Calu3 (cell line): ENCODE measurements at regions of chr6 and their contacts with region 1.

Region 1: DNA sequence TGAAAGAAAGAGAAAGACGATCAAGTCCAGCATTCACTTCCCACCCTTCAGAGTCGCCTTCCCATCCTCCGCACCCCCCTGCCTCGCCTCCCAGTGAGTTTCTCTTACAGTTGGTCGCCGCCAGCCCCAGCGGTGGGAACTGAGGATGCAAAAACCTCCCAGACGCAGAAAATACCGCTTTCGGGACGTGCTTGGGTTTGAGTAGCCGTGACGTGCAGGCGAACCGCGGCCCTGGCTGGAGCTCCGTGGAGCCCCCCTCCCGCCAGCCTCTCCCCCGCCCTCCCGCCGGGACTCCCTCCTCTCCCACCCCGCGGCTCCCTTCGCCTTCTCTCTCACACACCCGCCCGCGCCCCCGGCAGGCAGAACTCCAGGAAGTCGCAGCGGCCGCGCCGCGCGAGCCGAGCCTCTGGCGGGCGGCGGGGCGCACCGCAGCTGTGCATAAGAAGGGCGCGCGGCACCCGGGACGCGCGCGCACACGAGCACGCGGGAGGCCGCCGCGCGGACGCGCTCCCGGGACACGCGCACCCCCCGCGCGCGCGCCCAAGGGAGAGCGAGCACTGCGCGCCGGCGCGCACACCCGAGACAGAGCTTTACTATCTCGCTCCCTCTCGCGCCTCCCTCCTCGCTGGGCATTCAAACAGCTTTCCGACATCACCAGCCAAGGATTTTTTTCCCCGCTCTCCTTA is at the start of gene ADGRB3:
- DNase-seq: peak; percentile 72
- H3K4me3 Mint-ChIP-seq: peak within 1 kb of the TSS; percentile 78
- H3K27ac Mint-ChIP-seq: peak within 1 kb of the TSS; percentile 2
- H3K4me1 Mint-ChIP-seq: peaks cover 15% of the 10 kb centered on the region
- H3K27me3 Mint-ChIP-seq: peaks cover 45% of the 10 kb centered on the region
- CTCF ChIP-seq: peak; percentile 19
- total RNA-seq, gene ADGRB3: 0.09 and 0.44 TPM in 2 replicates

Region 2: GRCh38 chr6:68597642-68598041 is 37.2 kb before region 1 on chr6:
- CTCF ChIA-PET with region 1: no interaction called
- intact Hi-C with region 1: no loop called
- DNase-seq: no peak
- H3K4me3 Mint-ChIP-seq: no peak overlapping the region
- H3K27ac Mint-ChIP-seq: no peak overlapping the region
- H3K4me1 Mint-ChIP-seq: no peaks in the 10 kb centered on the region
- H3K27me3 Mint-ChIP-seq: no peaks in the 10 kb centered on the region
- CTCF ChIP-seq: no peak

Region 3: GRCh38 chr6:68778356-68779020 is 143.6 kb after region 1 on chr6:
- CTCF ChIA-PET with region 1: interaction called, 5 read pairs
- intact Hi-C with region 1: loop called (anchors 1 kb)
- DNase-seq: peak; percentile 39
- H3K4me3 Mint-ChIP-seq: no peak overlapping the region
- H3K27ac Mint-ChIP-seq: no peak overlapping the region
- H3K4me1 Mint-ChIP-seq: no peaks in the 10 kb centered on the region
- H3K27me3 Mint-ChIP-seq: no peaks in the 10 kb centered on the region
- CTCF ChIP-seq: peak; percentile 61

Region 4: DNA sequence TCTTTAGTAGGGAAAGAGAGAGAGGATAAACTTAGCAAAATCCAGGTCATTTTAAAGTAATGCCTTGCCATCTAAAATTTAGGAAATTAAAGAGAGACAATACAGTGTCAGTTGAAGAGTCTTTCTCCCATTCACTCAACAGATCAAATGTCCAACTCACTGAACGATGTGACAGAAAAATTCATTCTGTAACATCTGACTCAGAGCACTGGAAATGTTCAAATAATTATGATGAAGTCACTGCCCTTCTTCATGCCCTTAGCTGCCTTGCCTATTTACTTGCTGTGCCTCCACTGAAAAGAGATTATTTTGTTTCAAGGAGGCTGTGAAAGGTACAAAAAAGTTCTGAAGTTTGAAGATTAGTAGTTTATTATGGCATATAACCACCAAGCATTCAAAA is 435.0 kb after region 1 on chr6:
- CTCF ChIA-PET with region 1: no interaction called
- intact Hi-C with region 1: no loop called
- DNase-seq: no peak
- H3K4me3 Mint-ChIP-seq: no peak overlapping the region
- H3K27ac Mint-ChIP-seq: no peak overlapping the region
- H3K4me1 Mint-ChIP-seq: peaks cover 28% of the 10 kb centered on the region
- H3K27me3 Mint-ChIP-seq: no peaks in the 10 kb centered on the region
- CTCF ChIP-seq: no peak

Region 5: DNA sequence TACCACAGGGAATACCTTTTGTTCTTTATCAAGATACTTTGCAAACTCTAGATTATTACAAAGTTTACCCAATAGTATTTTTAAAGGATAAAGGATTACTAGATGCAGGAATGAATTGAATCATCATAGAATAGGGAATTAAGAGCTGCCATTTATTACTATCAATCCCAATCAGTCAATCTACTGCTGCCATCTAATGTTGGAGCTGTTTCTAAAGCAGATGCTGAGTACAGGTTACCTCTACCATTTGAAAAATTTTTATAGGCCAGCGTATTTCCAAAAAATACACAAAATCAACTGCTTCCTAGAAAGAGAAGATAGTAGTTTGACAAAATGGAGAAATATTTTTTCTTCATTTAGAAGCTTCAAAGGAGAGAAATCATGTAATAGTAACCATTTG is 520.6 kb after region 1 on chr6:
- CTCF ChIA-PET with region 1: no interaction called
- intact Hi-C with region 1: loop called (anchors 10 kb)
- DNase-seq: no peak
- H3K4me3 Mint-ChIP-seq: no peak overlapping the region
- H3K27ac Mint-ChIP-seq: no peak overlapping the region
- H3K4me1 Mint-ChIP-seq: peaks cover 9% of the 10 kb centered on the region
- H3K27me3 Mint-ChIP-seq: no peaks in the 10 kb centered on the region
- CTCF ChIP-seq: no peak